ENCODE measurements at regions of chr5 and their contacts with region 1.

Region 1: DNA sequence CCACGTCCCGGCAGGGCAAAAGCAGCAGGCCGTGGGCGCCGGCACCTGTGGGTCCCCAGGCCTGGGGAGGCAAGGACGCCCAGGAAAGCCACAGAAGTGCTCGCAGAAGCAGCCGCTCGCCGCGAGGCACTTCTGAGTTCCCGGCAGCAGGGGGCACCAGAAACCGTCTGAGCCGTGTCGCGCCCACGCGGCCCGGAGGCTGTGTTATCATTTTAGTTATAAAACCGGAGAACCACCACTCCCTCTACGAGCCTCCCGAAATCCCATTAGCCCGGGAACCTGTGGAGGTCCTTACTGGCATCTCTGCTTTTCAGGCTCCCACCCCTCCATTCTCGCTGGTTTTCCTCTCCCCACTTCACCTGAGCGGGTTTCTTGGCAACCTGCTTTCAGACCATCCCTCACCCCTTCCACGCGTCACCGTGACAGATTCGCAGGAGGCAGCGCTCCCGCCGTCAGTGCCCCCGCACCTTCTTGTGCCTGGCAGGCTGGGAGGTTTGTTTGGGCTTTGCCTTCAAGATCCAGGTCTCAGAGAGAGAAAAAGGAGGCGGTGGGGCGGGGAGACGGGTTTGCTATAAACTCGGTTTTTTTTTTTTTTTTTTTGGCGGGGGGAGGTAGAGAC is 2.3 kb downstream of the GDNF start:
- DNase-seq: peak; percentile 49
- H3K4me3 Mint-ChIP-seq: peak overlapping the region; percentile 64
- H3K27ac Mint-ChIP-seq: peak overlapping the region; percentile 83
- H3K4me1 Mint-ChIP-seq: peaks cover 20% of the 10 kb centered on the region
- H3K27me3 Mint-ChIP-seq: peaks cover 81% of the 10 kb centered on the region

Region 2: GRCh38 chr5:37234288-37234687 is 603.2 kb before region 1 on chr5:
- intact Hi-C with region 1: no loop called
- DNase-seq: no peak
- H3K4me3 Mint-ChIP-seq: no peak overlapping the region
- H3K27ac Mint-ChIP-seq: no peak overlapping the region
- H3K4me1 Mint-ChIP-seq: no peaks in the 10 kb centered on the region
- H3K27me3 Mint-ChIP-seq: no peaks in the 10 kb centered on the region

Region 3: GRCh38 chr5:38193015-38193581 is 355.6 kb after region 1 on chr5:
- intact Hi-C with region 1: loop called (anchors 1 kb)
- DNase-seq: peak; percentile 31
- H3K4me3 Mint-ChIP-seq: no peak overlapping the region
- H3K27ac Mint-ChIP-seq: no peak overlapping the region
- H3K4me1 Mint-ChIP-seq: no peaks in the 10 kb centered on the region
- H3K27me3 Mint-ChIP-seq: peaks cover 23% of the 10 kb centered on the region

Region 4: GRCh38 chr5:38258319-38259061 is 421.0 kb after region 1 on chr5 and contains the start of gene EGFLAM:
- intact Hi-C with region 1: loop called (anchors 5 kb)
- DNase-seq: no peak
- H3K4me3 Mint-ChIP-seq: no peak within 1 kb of the TSS
- H3K27ac Mint-ChIP-seq: no peak within 1 kb of the TSS
- H3K4me1 Mint-ChIP-seq: no peaks in the 10 kb centered on the region
- H3K27me3 Mint-ChIP-seq: peaks cover 53% of the 10 kb centered on the region
- total RNA-seq, gene EGFLAM: not detected in 2 replicates